SK-N-SH (cell line): ENCODE measurements at regions of chr22 and their contacts with region 1.

Region 1: DNA sequence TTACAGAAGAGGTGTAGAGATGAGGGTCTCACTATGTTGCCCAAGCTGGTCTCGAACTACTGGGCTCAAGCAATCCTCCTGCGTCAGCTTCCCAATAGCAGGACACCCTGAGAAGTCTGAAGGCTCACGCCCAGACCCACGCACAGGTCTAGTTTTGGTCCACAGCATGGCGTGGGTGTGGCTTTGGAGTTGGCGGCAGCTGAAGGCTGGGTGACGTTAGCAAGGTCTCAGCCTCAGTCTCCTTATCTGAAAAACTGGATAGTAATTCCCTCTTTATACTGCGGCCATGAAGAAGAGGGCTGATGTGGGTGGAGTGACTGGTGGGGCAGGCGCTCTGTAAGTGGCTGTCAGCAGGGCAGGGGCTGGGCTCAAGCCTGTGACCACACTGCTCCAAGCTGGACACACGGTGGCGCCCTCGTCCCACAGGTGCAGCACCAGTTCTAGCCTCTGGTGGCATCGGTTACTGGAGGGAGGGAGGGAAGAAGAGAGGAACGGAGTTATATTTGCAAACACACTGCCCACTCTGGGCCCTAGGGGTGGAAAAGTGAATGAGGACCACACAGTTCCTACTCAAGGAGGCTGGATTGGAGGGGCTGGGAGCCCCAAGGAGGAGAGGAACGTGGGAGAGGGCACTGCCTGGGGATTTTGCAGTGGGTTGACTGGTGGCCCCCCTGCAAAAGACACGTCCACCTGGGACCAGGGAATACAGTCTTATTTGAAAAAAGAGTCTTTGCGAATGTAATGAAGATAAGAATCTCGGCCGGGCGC is 19.6 kb upstream of the CARD10 start:
- DNase-seq: peak; percentile 93
- H3K4me3 ChIP-seq: peak overlapping the region in 1 of 2 experiments; percentile 40; a peak in 1 of 4 replicates
- H3K27ac ChIP-seq: no peak overlapping the region
- H3K4me1 ChIP-seq: peaks cover 10 to 11% of the 10 kb centered on the region in 2 experiments; a peak in 3 of 4 replicates
- H3K27me3 ChIP-seq: no peaks in the 10 kb centered on the region
- CTCF ChIP-seq: peak; percentile 98
- EP300 ChIP-seq: no peak
- RAD21 ChIP-seq: peak; percentile 100

Region 2: GRCh38 chr22:37508431-37508992 is 30.3 kb before region 1 on chr22:
- CTCF ChIA-PET with region 1: interaction called, 11 read pairs
- POLR2A ChIA-PET with region 1: no interaction called
- DNase-seq: no peak
- H3K4me3 ChIP-seq: no peak overlapping the region
- H3K27ac ChIP-seq: peak overlapping the region in 1 of 2 experiments; percentile 62; a peak in 1 of 4 replicates
- H3K4me1 ChIP-seq: peaks cover 0 to 20% of the 10 kb centered on the region in 2 experiments; a peak in 1 of 4 replicates
- H3K27me3 ChIP-seq: no peaks in the 10 kb centered on the region
- CTCF ChIP-seq: no peak
- EP300 ChIP-seq: no peak
- RAD21 ChIP-seq: no peak

Region 3: GRCh38 chr22:37561212-37562048 is 22.7 kb after region 1 on chr22:
- CTCF ChIA-PET with region 1: interaction called, 647 read pairs
- POLR2A ChIA-PET with region 1: interaction called, 3 read pairs
- DNase-seq: peak; percentile 94
- H3K4me3 ChIP-seq: peak overlapping the region; percentile 56 to 75
- H3K27ac ChIP-seq: peak overlapping the region in 1 of 2 experiments; percentile 96; a peak in 2 of 4 replicates
- H3K4me1 ChIP-seq: peaks cover 10 to 28% of the 10 kb centered on the region in 2 experiments; a peak in 3 of 4 replicates
- H3K27me3 ChIP-seq: no peaks in the 10 kb centered on the region
- CTCF ChIP-seq: peak; percentile 89
- EP300 ChIP-seq: no peak
- RAD21 ChIP-seq: peak; percentile 27; the same call in 1 of the 2 replicates

Region 4: GRCh38 chr22:37581504-37581903 is 42.7 kb after region 1 on chr22:
- CTCF ChIA-PET with region 1: interaction called, 13 read pairs
- POLR2A ChIA-PET with region 1: no interaction called
- DNase-seq: no peak
- H3K4me3 ChIP-seq: no peak overlapping the region
- H3K27ac ChIP-seq: no peak overlapping the region
- H3K4me1 ChIP-seq: no peaks in the 10 kb centered on the region; a peak in 2 of 4 replicates
- H3K27me3 ChIP-seq: no peaks in the 10 kb centered on the region
- CTCF ChIP-seq: no peak
- EP300 ChIP-seq: no peak
- RAD21 ChIP-seq: no peak

Region 5: GRCh38 chr22:37588546-37589215 is 49.9 kb after region 1 on chr22:
- CTCF ChIA-PET with region 1: interaction called, 60 read pairs
- POLR2A ChIA-PET with region 1: no interaction called
- DNase-seq: no peak
- H3K4me3 ChIP-seq: no peak overlapping the region
- H3K27ac ChIP-seq: no peak overlapping the region
- H3K4me1 ChIP-seq: no peaks in the 10 kb centered on the region
- H3K27me3 ChIP-seq: no peaks in the 10 kb centered on the region
- CTCF ChIP-seq: no peak
- EP300 ChIP-seq: no peak
- RAD21 ChIP-seq: no peak